Transverse colon (tissue), 4 donors: ENCODE measurements at regions of chr4 and their contacts with region 1.

Region 1: GRCh38 chr4:106334741-106335470 is 18.6 kb downstream of the AIMP1 start:
- DNase-seq: no peak
- H3K4me3 ChIP-seq: no peak overlapping the region
- H3K27ac ChIP-seq: no peak overlapping the region
- H3K4me1 ChIP-seq: no peaks in the 10 kb centered on the region
- H3K27me3 ChIP-seq: no peaks in the 10 kb centered on the region
- CTCF ChIP-seq: no peak
- EP300 ChIP-seq: no peak
- POLR2A ChIP-seq: no peak

Region 2: GRCh38 chr4:106114284-106114683 is 220.6 kb before region 1 on chr4:
- in situ Hi-C with region 1: no loop called
- intact Hi-C with region 1: loop called (anchors 5 kb)
- DNase-seq: no peak
- H3K4me3 ChIP-seq: no peak overlapping the region
- H3K27ac ChIP-seq: no peak overlapping the region
- H3K4me1 ChIP-seq: no peaks in the 10 kb centered on the region
- H3K27me3 ChIP-seq: no peaks in the 10 kb centered on the region
- CTCF ChIP-seq: no peak
- EP300 ChIP-seq: no peak
- POLR2A ChIP-seq: no peak

Region 3: GRCh38 chr4:106208481-106209460 is 126.1 kb before region 1 on chr4:
- in situ Hi-C with region 1: no loop called
- intact Hi-C with region 1: no loop called
- DNase-seq: no peak
- H3K4me3 ChIP-seq: no peak overlapping the region
- H3K27ac ChIP-seq: no peak overlapping the region
- H3K4me1 ChIP-seq: no peaks in the 10 kb centered on the region
- H3K27me3 ChIP-seq: no peaks in the 10 kb centered on the region
- CTCF ChIP-seq: no peak
- EP300 ChIP-seq: no peak
- POLR2A ChIP-seq: no peak